Heart left ventricle (tissue), 16 donors: ENCODE measurements at regions of chr1 and their contacts with region 1.

Region 1: DNA sequence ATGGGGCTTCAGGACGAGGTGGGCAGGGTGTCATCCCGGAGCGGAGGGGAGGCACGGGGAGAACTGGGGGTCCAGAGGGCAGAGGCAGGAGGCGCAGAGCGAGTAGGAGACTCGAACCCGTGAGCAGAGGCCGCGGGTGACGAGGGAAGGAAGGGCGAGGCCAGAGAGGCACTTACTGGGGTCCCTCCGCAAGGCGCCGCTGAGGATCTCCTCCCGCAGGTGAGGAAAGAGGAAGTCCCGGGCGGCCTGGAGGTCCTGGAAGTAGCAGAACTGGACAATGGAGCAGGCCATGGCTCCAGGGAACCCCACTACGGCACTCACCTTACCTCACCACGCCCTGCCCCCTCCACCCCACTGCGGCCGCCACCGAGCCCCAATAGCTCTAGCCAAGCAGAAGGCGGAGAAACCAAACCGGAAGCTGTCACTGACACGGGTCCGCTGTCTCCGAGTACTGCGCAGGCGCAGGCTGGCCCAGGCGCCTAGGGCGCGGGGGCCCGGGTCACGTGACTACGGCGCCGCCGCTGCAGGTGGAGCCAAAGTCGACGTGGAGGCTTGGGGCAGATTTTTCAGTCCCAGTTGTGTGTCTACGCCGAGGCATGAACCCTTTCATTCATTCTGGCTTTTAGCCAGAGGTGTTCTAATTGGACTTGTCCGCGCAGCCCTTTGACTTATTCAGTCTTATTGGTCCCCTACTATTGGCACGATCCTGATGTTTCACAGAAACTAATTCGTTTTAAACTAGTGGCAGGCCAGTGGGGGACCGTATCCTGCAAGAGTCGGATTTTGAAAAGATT is at the start of gene RAB3GAP2:
- DNase-seq: peak; percentile 96 to 98 (median 97)
- ATAC-seq: peak; percentile 95 to 99 (median 99)
- H3K4me3 ChIP-seq: peak within 1 kb of the TSS; percentile 65 to 97 (median 92)
- H3K27ac ChIP-seq: peak within 1 kb of the TSS; percentile 66 to 93 (median 88)
- H3K4me1 ChIP-seq: peaks cover 0 to 40% (median 16%) of the 10 kb centered on the region in 12 donors
- H3K27me3 ChIP-seq: peaks cover 0 to 1% (median 0%) of the 10 kb centered on the region in 9 donors
- CTCF ChIP-seq: peak in 1 of 12 donors; percentile 1
- POLR2A ChIP-seq: peak in 1 of 2 donors; percentile 63
- total RNA-seq, gene RAB3GAP2: 13.8 to 39.3 (median 28.9) TPM

Region 2: DNA sequence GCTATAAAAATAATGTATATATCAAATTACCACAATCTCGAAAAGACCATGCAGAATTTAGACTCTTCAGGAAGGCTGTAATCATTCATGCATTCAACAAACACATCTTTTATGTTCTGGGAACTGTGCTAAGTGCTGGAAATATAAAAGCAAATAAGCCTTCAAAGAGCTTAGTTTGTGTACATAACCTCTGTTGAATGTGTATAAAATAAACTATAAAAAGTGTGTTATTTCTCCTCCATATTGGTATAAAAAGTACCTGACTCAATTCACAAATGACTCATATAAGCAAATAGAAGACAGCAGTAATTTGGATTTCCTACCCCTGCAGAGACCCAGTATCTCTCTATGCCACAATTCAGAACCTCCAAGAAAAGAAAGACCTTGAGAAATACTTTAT is 36.8 kb before region 1 on chr1:
- intact Hi-C with region 1: loop called in 1 of 10 experiments (anchors 5 kb)
- DNase-seq: no peak
- ATAC-seq: no peak
- H3K4me3 ChIP-seq: no peak overlapping the region
- H3K27ac ChIP-seq: no peak overlapping the region
- H3K4me1 ChIP-seq: peaks cover 0 to 14% (median 4%) of the 10 kb centered on the region in 12 donors
- H3K27me3 ChIP-seq: no peaks in the 10 kb centered on the region
- CTCF ChIP-seq: no peak
- POLR2A ChIP-seq: no peak